ENCODE measurements at regions of chrX and their contacts with region 1.

Region 1: DNA sequence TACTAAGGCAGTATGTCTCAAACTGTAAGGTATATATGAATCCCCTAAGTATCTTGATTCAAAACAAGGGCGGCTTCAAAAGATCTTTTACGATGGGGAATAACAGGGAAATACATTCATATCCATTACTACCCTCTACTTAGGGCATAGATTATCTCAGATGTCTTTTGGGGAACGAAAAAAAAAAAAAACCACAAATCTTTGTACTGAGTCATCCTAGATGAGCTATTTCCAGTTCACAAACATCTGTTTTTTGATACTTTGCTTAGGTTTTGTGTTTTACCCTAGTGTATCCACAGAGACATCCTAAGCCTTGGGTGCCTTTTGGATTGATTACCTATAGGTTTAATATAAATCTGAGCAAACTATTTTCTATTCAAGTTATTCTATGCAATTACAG is 457.2 kb downstream of the NLGN4X start:
- DNase-seq: no peak
- H3K4me3 ChIP-seq: no peak overlapping the region
- H3K27ac ChIP-seq: no peak overlapping the region
- H3K4me1 ChIP-seq: no peaks in the 10 kb centered on the region
- H3K27me3 ChIP-seq: no peaks in the 10 kb centered on the region
- CTCF ChIP-seq: no peak

Region 2: DNA sequence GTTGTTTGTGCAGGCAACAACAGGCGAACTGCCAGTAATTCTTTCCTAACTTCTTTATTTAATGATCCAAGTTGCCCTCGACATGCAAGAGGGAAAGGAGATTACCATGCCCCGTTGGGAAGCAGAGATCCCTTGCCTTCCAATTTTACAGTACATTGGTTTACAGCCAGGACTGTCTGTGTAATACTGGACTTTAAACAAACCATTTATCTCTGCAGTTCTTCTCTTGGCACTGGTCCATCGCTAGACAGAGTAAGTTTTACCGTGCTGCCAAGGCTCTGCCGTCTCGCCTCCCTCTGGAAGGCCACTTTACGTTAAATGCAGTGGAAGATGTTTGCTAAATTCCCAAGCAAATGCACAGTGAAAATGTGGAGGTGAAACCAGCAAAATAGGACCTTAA is 1397.7 kb before region 1 on chrX:
- CTCF ChIA-PET with region 1: interaction called, 13 read pairs
- POLR2A ChIA-PET with region 1: no interaction called
- intact Hi-C with region 1: no loop called
- DNase-seq: no peak
- H3K4me3 ChIP-seq: no peak overlapping the region
- H3K27ac ChIP-seq: no peak overlapping the region
- H3K4me1 ChIP-seq: peaks cover 8% of the 10 kb centered on the region
- H3K27me3 ChIP-seq: no peaks in the 10 kb centered on the region
- CTCF ChIP-seq: no peak

Region 3: DNA sequence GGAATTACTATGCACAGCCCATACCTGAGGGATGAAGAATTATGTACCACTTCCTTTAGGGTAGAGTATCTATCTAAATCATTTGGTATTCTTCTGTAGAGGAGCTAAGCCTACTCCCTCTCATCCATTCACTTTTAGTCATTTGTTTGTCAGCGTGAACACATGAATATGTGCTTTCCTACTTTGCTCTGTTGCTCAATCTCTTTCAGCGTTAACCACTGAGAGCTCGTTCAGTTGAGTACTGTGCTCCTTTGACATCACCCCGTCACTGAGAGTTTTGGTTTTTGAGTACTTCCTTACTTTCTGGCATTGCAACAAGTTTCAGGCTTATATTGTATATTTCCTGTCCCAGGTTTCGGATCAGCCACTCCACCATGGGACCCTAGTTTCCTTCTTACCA is 243.4 kb before region 1 on chrX:
- CTCF ChIA-PET with region 1: no interaction called
- POLR2A ChIA-PET with region 1: no interaction called
- intact Hi-C with region 1: no loop called
- DNase-seq: no peak
- H3K4me3 ChIP-seq: no peak overlapping the region
- H3K27ac ChIP-seq: no peak overlapping the region
- H3K4me1 ChIP-seq: no peaks in the 10 kb centered on the region
- H3K27me3 ChIP-seq: no peaks in the 10 kb centered on the region
- CTCF ChIP-seq: no peak

Measured in PC-9 (cell line).